Left colon (tissue), 2 donors: ENCODE measurements at regions of chr21 and their contacts with region 1.

Region 1: DNA sequence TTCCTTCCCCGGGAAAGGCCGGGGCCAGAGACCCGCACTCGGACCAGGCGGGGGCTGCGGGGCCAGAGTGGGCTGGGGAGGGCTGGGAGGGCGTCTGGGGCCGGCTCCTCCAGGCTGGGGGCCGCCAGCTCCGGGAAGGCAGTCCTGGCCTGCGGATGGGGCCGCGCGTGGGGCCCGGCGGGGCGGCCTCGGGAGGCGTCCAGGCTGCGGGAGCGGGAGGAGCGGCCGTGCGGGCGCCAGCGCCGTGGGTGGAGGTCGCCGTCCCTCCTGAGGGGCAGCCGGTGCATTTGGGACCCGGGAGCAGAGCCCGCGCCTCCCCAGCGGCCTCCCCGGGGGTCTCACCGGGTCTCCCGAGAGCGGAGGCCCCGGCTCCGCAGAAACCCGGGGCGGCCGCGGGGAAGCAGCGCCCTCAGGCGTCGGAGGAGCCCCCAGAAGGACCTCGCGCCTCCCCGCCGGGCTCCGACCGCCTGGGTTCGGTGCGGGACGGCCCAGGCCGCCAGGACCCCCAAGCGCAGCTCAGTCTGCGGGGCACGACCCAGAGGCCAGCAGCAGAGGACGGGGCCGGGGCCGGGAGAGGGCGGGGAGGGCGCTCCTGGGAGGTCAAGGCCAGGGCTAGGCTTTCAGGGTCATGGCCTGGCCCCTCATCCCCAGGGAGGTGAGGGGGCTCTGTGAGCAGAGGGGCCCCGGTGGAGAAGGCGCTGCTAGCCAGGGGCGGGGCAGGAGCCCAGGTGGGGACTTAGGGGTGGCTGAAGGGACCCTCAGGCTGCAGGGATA is 7.2 kb upstream of the SLX9 start:
- DNase-seq: peak in 1 of 2 donors; percentile 72
- ATAC-seq: peak; percentile 66

Region 2: GRCh38 chr21:44892536-44893277 is 39.9 kb before region 1 on chr21:
- intact Hi-C with region 1: loop called in 1 of 2 experiments (anchors 5 kb)
- DNase-seq: peak in 1 of 2 donors; percentile 75
- ATAC-seq: peak; percentile 38